Heart left ventricle (tissue), 16 donors: ENCODE measurements at regions of chr22 and their contacts with region 1.

Region 1: DNA sequence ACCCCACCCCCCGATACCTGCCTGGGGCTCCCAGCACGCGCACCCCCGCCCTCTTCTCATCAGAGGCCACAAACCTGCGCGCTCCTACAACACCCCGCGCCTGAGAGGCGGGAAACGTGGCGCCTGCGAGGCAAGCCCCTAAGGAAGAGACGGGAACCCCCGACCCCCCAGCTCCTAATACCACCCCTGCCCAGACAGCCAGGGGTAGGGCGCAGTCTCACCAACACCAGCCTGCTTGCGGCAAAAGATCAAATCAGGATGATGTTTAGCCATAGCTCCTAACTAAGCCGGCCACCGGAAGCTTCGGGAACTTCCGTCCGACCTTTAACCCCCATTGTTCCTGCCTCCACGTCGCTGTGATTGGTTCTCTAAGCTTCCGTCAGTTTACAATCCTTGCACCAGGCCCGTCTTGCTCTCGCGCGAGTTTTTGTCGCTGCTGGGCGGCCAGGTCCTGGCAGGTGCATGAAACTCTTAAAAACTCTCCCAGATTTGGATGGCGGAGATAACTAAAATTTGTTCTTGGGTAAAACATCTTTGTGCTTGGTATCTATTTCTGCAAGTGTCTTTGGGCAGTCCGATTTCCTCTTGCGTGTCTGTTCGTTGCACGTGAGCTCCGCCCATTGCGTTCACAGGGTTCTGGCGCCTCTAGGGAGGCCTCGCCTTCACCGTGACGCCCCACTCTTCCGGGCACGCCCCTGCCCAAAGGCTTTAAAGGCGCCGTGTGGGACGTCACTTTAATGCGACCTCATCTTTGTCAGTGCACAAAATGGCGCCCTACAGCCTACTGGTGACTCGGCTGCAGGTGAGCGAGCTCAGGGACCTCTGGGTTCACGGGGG is at the starts of genes ACO2 and PHF5A:
- DNase-seq: peak; percentile 97 to 99 (median 98)
- ATAC-seq: peak; percentile 95 to 97 (median 97)
- H3K4me3 ChIP-seq: peak within 1 kb of the TSS; percentile 71 to 100 (median 95)
- H3K27ac ChIP-seq: peak within 1 kb of the TSS; percentile 91 to 99 (median 97)
- H3K4me1 ChIP-seq: peaks cover 0 to 53% (median 34%) of the 10 kb centered on the region in 12 donors
- H3K27me3 ChIP-seq: no peaks in the 10 kb centered on the region
- CTCF ChIP-seq: no peak
- POLR2A ChIP-seq: peak; percentile 58 to 77
- total RNA-seq, gene ACO2: 503 to 1,146 (median 862) TPM
- total RNA-seq, gene PHF5A: 13.4 to 29.3 (median 20.0) TPM

Region 2: GRCh38 chr22:41448189-41448808 is 20.3 kb before region 1 on chr22:
- intact Hi-C with region 1: loop called in 5 of 10 experiments (anchors 1 to 2 kb)
- DNase-seq: peak; percentile 95 to 98 (median 97)
- ATAC-seq: peak; percentile 78 to 88 (median 86)
- H3K4me3 ChIP-seq: peak overlapping the region; percentile 76 to 98 (median 94)
- H3K27ac ChIP-seq: peak overlapping the region; percentile 94 to 100 (median 99)
- H3K4me1 ChIP-seq: peaks cover 0 to 19% (median 13%) of the 10 kb centered on the region in 12 donors
- H3K27me3 ChIP-seq: no peaks in the 10 kb centered on the region
- CTCF ChIP-seq: no peak
- POLR2A ChIP-seq: peak in 1 of 2 donors; percentile 90

Region 3: GRCh38 chr22:41508770-41509170 is 40.2 kb after region 1 on chr22:
- intact Hi-C with region 1: loop called in 5 of 10 experiments (anchors 5 kb)
- DNase-seq: peak in 4 of 5 donors; percentile 56 to 74 (median 63)
- ATAC-seq: peak; percentile 16 to 59 (median 45)
- H3K4me3 ChIP-seq: no peak overlapping the region
- H3K27ac ChIP-seq: peak overlapping the region in 10 of 12 donors; percentile 8 to 89 (median 62)
- H3K4me1 ChIP-seq: peaks cover 0 to 99% (median 46%) of the 10 kb centered on the region in 12 donors
- H3K27me3 ChIP-seq: no peaks in the 10 kb centered on the region
- CTCF ChIP-seq: peak in 4 of 12 donors; percentile 6 to 14 (median 13)
- POLR2A ChIP-seq: no peak

Region 4: DNA sequence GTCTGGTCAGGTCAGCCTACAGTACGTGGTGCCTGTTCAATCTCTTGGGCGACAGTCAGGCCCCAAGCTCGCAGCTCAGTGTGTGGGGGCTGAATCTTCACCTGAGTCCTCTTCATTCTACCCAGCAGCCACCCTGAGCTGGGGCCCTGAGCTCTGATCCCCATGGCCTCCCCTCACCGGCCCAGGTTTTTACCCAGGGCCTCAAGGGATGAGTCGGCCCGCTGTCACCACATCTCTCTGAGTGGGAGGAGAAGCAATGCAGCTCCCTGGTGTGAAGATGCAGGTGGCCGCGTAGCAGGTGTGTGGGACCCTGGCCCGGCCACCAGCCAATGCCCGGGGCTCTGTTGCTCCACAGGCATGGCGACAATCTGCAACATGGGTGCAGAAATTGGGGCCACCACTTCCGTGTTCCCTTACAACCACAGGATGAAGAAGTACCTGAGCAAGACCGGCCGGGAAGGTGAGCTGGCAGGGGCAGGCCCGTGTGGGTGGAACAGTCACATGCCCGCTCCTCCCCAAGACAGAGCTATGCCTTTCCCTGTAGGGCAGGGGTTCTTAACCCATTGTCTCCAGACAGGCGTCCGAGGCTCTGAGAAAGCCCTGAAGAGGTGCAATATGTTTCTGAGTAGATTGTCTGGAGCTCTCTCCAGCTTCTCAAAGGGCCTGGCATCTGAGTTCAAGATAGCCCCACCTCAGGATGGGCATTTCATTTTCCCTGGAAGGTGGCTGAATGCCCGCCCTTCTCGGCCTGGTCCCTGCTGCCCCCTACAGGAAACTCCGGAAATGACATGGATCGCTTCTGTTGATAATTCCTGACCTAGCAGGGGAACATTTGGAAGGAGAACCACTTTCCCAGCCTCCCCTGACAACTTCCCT is 48.8 kb after region 1 on chr22:
- intact Hi-C with region 1: loop called in 3 of 10 experiments (anchors 5 kb)
- DNase-seq: peak in 3 of 5 donors; percentile 63 to 74 (median 70)
- ATAC-seq: peak in 3 of 4 donors; percentile 37 to 40 (median 38)
- H3K4me3 ChIP-seq: no peak overlapping the region
- H3K27ac ChIP-seq: peak overlapping the region in 9 of 12 donors; percentile 16 to 89 (median 54)
- H3K4me1 ChIP-seq: peaks cover 0 to 48% (median 18%) of the 10 kb centered on the region in 12 donors
- H3K27me3 ChIP-seq: no peaks in the 10 kb centered on the region
- CTCF ChIP-seq: peak; percentile 81 to 93 (median 88)
- POLR2A ChIP-seq: no peak

Region 5: DNA sequence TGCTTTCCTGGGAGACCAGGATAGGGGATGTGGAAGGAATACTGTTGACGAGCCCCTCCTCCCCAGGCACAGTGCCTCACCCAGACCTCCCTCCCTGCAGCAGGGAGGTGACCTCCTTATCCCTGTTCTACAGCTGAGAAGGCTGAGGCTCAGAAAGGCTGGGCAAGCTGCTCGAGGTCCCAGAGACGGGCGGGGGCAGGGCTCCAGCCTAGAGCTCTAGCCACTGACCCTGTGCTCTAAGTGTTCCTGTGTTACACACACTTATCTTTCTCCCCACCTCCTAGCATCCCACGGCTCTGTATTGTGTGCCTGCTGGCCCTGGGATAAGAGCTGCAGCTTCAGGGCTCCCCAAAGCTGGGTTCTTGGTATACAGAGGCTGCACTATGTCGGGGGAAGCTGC is 339.8 kb after region 1 on chr22:
- intact Hi-C with region 1: no loop called
- DNase-seq: no peak
- ATAC-seq: peak in 1 of 4 donors; percentile 13
- H3K4me3 ChIP-seq: no peak overlapping the region
- H3K27ac ChIP-seq: no peak overlapping the region
- H3K4me1 ChIP-seq: no peaks in the 10 kb centered on the region
- H3K27me3 ChIP-seq: no peaks in the 10 kb centered on the region
- CTCF ChIP-seq: no peak
- POLR2A ChIP-seq: no peak